ENCODE measurements at regions of chr3 and their contacts with region 1.

Region 1: GRCh38 chr3:11944052-11944673 is 60.0 kb upstream of the SYN2 start:
- DNase-seq: peak; percentile 70
- ATAC-seq: peak; percentile 100
- H3K4me3 ChIP-seq: peak overlapping the region in 1 of 2 experiments; percentile 34; a peak in 1 of 4 replicates
- H3K27ac ChIP-seq: no peak overlapping the region
- H3K4me1 ChIP-seq: peaks cover 0 to 4% of the 10 kb centered on the region in 2 experiments; a peak in 1 of 4 replicates
- H3K27me3 ChIP-seq: no peaks in the 10 kb centered on the region
- CTCF ChIP-seq: peak; percentile 70 to 91 (median 83); a peak in 5 of 6 replicates
- POLR2A ChIP-seq: no peak
- RAD21 ChIP-seq: peak; percentile 66

Region 2: GRCh38 chr3:11928381-11928780 is 15.8 kb before region 1 on chr3:
- CTCF ChIA-PET with region 1: no interaction called
- POLR2A ChIA-PET with region 1: no interaction called
- RAD21 ChIA-PET with region 1: no interaction called
- intact Hi-C with region 1: no loop called
- DNase-seq: no peak
- ATAC-seq: no peak
- H3K4me3 ChIP-seq: no peak overlapping the region
- H3K27ac ChIP-seq: no peak overlapping the region
- H3K4me1 ChIP-seq: no peaks in the 10 kb centered on the region
- H3K27me3 ChIP-seq: no peaks in the 10 kb centered on the region; the same call in none of the 2 replicates
- CTCF ChIP-seq: no peak
- POLR2A ChIP-seq: no peak
- RAD21 ChIP-seq: no peak

Region 3: DNA sequence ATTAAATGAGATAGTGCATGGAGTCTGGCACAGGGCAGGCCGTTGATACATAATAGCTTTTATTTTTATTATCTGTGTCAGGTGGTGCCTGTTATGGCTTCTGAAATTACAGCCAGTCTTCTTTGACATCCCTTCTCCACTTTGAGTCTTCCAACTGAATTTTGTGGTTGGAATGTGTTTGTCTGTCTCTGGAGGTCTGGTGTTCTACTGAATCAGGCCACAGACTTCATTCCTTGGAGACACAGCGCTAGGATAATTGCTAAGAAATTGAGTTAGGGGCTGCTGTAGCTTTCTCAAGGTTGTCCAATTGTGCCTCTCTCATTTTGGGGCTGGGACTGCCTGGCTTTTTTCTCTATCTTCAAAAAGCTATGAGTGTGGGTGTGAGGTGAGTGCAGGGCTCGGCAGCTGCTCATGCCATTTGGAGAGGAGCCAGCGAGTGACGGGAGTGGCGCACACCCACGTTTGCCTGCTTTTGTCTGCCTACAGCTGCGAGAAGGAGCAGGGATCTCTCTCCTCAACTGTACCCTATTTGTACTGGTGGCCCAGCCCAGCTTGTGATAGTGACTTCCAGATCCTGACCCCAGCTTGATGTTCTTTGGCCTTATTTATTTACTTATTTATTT is 10.3 kb after region 1 on chr3:
- CTCF ChIA-PET with region 1: interaction called, 11 read pairs
- POLR2A ChIA-PET with region 1: no interaction called
- RAD21 ChIA-PET with region 1: interaction called in 1 of 2 experiments, 3 read pairs
- intact Hi-C with region 1: no loop called
- DNase-seq: no peak
- ATAC-seq: no peak
- H3K4me3 ChIP-seq: no peak overlapping the region
- H3K27ac ChIP-seq: no peak overlapping the region
- H3K4me1 ChIP-seq: no peaks in the 10 kb centered on the region
- H3K27me3 ChIP-seq: no peaks in the 10 kb centered on the region; the same call in 1 of the 2 replicates
- CTCF ChIP-seq: no peak
- POLR2A ChIP-seq: no peak
- RAD21 ChIP-seq: no peak